ENCODE measurements at regions of chr4 and their contacts with region 1.

Region 1: DNA sequence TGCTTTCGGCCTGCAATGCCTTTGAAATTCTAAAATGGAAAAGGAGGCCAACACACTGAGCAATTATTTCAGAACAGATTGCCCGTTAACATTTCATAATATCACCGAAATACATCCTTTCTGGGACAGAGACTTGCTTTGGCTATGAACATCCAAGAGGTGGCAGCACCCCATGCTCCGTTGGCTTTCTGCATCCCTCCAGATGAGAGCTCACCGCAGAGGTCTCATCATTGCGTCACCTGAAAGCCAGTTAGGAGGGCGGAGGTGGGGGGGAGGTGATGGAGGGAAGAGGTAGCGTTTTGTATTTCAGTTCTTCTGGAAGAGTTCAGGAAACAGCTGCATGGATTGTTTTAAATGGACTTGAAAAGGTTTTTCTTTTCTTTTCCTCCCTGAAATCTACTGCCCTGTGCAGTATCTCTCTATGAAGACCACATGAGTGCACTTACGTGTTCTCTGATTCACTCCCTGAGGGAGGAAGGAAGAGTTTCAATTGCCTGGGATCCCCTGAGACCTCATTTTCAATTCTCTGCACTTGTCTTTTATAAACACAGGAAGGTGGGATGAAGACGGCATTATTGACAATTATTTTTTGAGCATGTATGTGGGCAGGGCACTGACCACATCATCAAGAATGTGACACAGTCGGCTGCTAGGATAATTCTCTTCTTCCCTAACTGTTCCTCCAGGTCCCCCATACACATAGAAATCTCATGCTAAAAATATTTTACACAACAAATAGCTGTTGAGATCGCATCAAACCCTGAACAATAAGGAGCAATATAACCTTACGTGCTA is 166.9 kb upstream of the PGRMC2 start:
- DNase-seq: peak; percentile 92
- H3K4me3 ChIP-seq: no peak overlapping the region
- H3K27ac ChIP-seq: peak overlapping the region; percentile 55
- H3K4me1 ChIP-seq: peaks cover 17% of the 10 kb centered on the region
- H3K27me3 ChIP-seq: no peaks in the 10 kb centered on the region
- CTCF ChIP-seq: peak; percentile 79 to 90
- POLR2A ChIP-seq: no peak

Region 2: DNA sequence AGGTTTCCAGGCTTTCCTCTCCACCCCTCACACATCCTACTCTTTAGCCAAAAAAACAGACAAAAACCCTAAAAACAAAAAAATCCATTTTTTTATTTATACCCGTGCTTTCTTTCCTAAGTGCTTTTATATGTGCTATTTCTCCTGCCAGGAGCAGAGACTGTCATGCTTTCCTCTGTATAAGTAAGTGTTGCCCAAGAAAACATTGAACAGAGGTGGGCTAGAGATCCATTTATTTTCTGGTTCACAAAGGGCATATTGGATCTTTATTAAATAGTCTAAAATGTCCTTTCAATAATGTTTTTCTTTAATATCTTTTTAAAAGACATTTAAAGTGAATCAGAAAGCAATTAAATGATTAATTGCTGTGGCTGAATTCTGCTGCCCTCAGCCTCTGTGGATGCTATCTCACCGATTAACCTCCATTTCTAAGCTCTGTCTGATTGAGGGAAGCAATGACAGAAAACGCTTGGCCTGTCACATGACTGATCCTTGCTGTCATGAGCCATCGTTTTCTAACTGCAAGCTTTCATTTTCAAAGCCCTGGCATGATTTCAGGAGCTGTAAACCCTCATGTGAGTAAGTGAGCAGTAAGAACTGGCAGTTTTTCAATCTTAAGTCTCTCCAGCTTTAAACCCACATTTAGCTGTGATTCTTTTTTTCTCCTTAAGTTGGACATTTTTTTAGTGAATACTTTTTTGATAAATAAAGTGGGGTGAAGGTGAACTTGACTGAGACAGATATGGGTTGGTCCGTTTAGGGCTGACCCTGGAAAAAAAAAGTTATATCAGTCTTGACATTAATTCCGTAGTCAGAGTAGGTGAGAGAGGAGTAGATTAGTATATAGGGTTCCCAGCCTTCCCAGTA is 13.9 kb after region 1 on chr4:
- CTCF ChIA-PET with region 1: interaction called, 30 read pairs
- POLR2A ChIA-PET with region 1: no interaction called
- dilution Hi-C with region 1: no loop called
- intact Hi-C with region 1: no loop called
- DNase-seq: peak; percentile 90
- H3K4me3 ChIP-seq: no peak overlapping the region
- H3K27ac ChIP-seq: peak overlapping the region; percentile 19
- H3K4me1 ChIP-seq: peaks cover 5% of the 10 kb centered on the region
- H3K27me3 ChIP-seq: no peaks in the 10 kb centered on the region
- CTCF ChIP-seq: no peak
- POLR2A ChIP-seq: no peak

Region 3: GRCh38 chr4:128528793-128529553 is 74.5 kb after region 1 on chr4:
- CTCF ChIA-PET with region 1: interaction called, 19 read pairs
- POLR2A ChIA-PET with region 1: interaction called, 3 read pairs
- dilution Hi-C with region 1: no loop called
- intact Hi-C with region 1: loop called (anchors 1 kb)
- DNase-seq: peak; percentile 88
- H3K4me3 ChIP-seq: no peak overlapping the region
- H3K27ac ChIP-seq: peak overlapping the region; percentile 95
- H3K4me1 ChIP-seq: peaks cover 29% of the 10 kb centered on the region
- H3K27me3 ChIP-seq: no peaks in the 10 kb centered on the region
- CTCF ChIP-seq: no peak
- POLR2A ChIP-seq: no peak

Region 4: GRCh38 chr4:128565565-128566186 is 111.2 kb after region 1 on chr4:
- CTCF ChIA-PET with region 1: interaction called, 10 read pairs
- POLR2A ChIA-PET with region 1: no interaction called
- dilution Hi-C with region 1: no loop called
- intact Hi-C with region 1: loop called (anchors 1 kb)
- DNase-seq: peak; percentile 51
- H3K4me3 ChIP-seq: no peak overlapping the region
- H3K27ac ChIP-seq: no peak overlapping the region
- H3K4me1 ChIP-seq: peaks cover 17% of the 10 kb centered on the region
- H3K27me3 ChIP-seq: no peaks in the 10 kb centered on the region
- CTCF ChIP-seq: peak; percentile 56 to 68
- POLR2A ChIP-seq: no peak

Region 5: GRCh38 chr4:128809477-128810330 is 355.2 kb after region 1 on chr4 and contains the start of gene JADE1:
- CTCF ChIA-PET with region 1: interaction called, 38 read pairs
- POLR2A ChIA-PET with region 1: no interaction called
- dilution Hi-C with region 1: no loop called
- intact Hi-C with region 1: loop called (anchors 1 kb)
- DNase-seq: peak; percentile 95
- H3K4me3 ChIP-seq: peak within 1 kb of the TSS; percentile 77 to 98 (median 94)
- H3K27ac ChIP-seq: peak within 1 kb of the TSS; percentile 93
- H3K4me1 ChIP-seq: peaks cover 7% of the 10 kb centered on the region
- H3K27me3 ChIP-seq: no peaks in the 10 kb centered on the region
- CTCF ChIP-seq: peak; percentile 65 to 72
- POLR2A ChIP-seq: no peak
- total RNA-seq, gene JADE1: 39.2 and 45.6 TPM in 2 replicates

Region 6: DNA sequence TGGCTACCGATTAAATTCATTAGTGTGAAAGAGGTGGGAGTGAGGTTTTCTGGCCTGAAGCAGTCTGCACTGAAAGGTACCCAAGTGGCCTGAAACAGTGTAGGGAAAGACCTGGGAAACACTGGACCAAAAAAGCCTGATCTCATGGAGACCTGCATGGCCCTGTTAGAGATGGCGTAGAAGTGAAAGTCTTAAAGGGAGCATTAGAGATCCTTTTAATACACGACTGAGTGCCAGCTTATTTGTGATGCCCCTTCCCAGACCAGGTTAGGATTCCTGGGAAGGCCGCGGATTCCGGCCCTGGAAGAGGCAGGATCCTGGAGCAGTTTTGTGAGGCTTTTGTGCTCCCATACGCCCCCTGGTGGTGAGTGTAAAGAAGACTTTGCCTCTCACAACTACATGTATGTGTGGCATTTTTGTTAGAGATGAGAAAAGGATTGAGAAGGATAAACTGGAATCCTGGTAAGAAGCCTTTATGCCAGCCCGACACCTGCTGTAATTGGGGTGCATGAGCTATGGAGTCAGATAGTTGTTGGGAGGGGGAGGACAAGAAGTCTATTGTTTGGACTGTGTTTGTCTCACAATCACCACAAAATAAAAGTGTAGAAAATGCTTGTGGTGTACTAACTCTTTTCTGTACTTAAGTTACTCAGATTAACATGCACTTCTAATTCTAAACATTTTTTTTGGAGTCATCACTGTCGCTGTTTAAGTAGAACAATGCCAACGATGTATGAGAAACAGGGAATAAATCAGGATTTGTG is 409.0 kb after region 1 on chr4:
- CTCF ChIA-PET with region 1: interaction called, 29 read pairs
- POLR2A ChIA-PET with region 1: no interaction called
- dilution Hi-C with region 1: no loop called
- intact Hi-C with region 1: loop called (anchors 1 kb)
- DNase-seq: peak; percentile 81
- H3K4me3 ChIP-seq: no peak overlapping the region
- H3K27ac ChIP-seq: no peak overlapping the region
- H3K4me1 ChIP-seq: peaks cover 11% of the 10 kb centered on the region
- H3K27me3 ChIP-seq: no peaks in the 10 kb centered on the region
- CTCF ChIP-seq: peak; percentile 78 to 83
- POLR2A ChIP-seq: no peak

Measured in endothelial cell of umbilical vein (primary cell).